ENCODE measurements at regions of chr5 and their contacts with region 1.

Region 1: DNA sequence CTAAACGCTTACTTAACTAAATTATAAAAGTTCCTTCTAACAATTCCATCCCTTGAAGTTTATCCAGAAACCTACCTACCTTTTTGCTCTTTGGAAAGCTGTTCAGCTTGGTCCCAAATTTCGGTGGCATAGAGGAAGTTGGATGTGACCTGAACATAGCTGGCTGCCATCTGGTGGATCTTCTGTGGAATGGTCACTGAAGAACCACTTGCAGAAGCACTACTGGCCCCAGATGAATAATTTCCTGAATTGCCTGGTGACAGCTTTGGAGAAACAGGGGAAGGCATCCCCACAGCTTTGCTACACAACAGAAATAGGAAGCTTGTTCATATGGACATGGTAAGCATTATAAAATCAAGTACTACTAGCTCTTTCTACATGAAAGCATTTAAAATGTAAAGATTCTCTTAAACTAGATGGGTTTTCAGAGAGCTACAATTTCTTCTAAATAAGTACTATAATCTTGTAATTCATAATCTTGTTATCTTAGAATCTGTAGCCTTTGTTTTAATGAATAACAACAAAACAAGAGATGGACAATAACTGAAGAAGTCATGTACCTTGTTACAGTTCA is 9.9 kb downstream of the LEAP2 start:
- DNase-seq: peak; percentile 82
- H3K4me3 ChIP-seq: no peak overlapping the region
- H3K27ac ChIP-seq: no peak overlapping the region
- H3K4me1 ChIP-seq: peaks cover 6% of the 10 kb centered on the region
- H3K27me3 ChIP-seq: no peaks in the 10 kb centered on the region
- CTCF ChIP-seq: peak; percentile 66 to 69
- POLR2A ChIP-seq: no peak

Region 2: DNA sequence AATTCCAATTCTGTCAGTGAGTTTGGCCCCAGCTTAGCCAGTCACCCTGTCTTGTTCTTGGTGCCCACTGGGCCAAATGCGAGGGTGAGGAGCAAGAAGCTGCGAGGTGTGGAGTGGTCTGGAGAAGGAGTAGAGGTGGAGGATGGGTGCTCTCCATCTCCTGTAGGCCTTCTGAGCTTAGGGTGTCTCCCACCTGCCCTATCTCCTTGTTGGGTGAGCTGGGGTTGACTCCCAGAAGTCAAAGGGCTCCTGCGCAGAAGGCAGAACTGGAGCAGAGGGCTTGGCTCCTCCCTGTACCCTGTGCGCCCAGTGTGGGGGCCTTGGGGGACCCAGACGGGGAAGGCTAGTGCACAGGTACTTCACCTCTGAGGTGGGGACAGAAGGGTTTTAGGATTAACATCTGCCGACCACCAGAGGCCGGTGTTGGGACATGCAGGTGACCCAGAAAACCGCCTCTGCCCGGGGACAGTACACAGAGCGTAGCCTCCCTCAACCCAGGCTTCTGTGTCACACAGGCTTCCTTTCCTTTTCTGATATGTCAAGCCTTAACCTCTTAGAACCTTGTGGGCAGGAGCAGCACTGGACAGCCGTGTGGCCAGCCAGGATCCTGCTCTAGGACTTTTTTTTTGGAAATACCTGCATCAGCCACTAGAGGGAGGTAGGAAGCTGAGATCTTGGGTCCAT is 356.9 kb before region 1 on chr5:
- CTCF ChIA-PET with region 1: interaction called, 5 read pairs
- POLR2A ChIA-PET with region 1: no interaction called
- dilution Hi-C with region 1: no loop called
- intact Hi-C with region 1: loop called (anchors 1 kb)
- DNase-seq: peak; percentile 75
- H3K4me3 ChIP-seq: no peak overlapping the region
- H3K27ac ChIP-seq: no peak overlapping the region
- H3K4me1 ChIP-seq: no peaks in the 10 kb centered on the region
- H3K27me3 ChIP-seq: peaks cover under 1 to 3% of the 10 kb centered on the region in 2 experiments
- CTCF ChIP-seq: peak; percentile 76 to 83
- POLR2A ChIP-seq: no peak

Region 3: GRCh38 chr5:132753135-132753987 is 130.0 kb before region 1 on chr5:
- CTCF ChIA-PET with region 1: interaction called, 14 read pairs
- POLR2A ChIA-PET with region 1: no interaction called
- dilution Hi-C with region 1: no loop called
- intact Hi-C with region 1: loop called (anchors 5 kb)
- DNase-seq: no peak
- H3K4me3 ChIP-seq: no peak overlapping the region
- H3K27ac ChIP-seq: no peak overlapping the region
- H3K4me1 ChIP-seq: no peaks in the 10 kb centered on the region
- H3K27me3 ChIP-seq: no peaks in the 10 kb centered on the region
- CTCF ChIP-seq: peak in 1 of 2 donors; percentile 6
- POLR2A ChIP-seq: no peak

Region 4: GRCh38 chr5:132768485-132768868 is 114.9 kb before region 1 on chr5:
- CTCF ChIA-PET with region 1: no interaction called
- POLR2A ChIA-PET with region 1: no interaction called
- dilution Hi-C with region 1: no loop called
- intact Hi-C with region 1: no loop called
- DNase-seq: no peak
- H3K4me3 ChIP-seq: no peak overlapping the region
- H3K27ac ChIP-seq: no peak overlapping the region
- H3K4me1 ChIP-seq: peaks cover 26% of the 10 kb centered on the region
- H3K27me3 ChIP-seq: no peaks in the 10 kb centered on the region
- CTCF ChIP-seq: no peak
- POLR2A ChIP-seq: no peak

Region 5: DNA sequence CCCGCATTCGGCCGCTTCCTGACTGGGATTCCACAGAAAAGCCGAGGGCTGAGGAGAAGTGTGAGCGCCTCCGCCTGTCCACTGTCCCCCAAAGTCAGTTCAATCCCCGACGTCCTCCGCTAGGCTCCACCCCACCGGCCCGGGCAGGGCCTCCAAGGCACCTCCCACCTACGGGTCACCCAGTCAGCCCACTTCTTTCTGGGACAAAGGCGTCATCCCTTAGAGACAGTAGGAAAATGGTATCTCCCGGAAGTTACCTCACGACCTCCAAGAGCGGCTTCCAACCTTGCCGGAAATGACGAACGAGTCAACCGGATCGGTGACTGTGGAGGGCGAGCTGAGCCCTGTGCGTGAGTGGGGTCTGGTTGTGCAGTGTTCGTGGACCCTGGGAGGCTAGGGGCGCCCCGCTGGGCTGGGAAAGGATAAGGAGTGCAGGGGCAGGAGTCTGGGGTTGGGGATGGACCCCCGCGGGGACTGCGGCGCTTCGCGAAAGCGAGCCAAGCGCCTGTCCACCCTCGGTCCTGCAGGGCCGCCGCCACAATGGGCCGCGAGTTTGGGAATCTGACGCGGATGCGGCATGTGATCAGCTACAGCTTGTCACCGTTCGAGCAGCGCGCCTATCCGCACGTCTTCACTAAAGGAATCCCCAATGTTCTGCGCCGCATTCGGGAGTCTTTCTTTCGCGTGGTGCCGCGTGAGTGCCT is 16.9 kb before region 1 on chr5 and contains the starts of genes GDF9 and UQCRQ:
- CTCF ChIA-PET with region 1: interaction called, 11 read pairs
- POLR2A ChIA-PET with region 1: interaction called, 6 read pairs
- dilution Hi-C with region 1: no loop called
- intact Hi-C with region 1: loop called (anchors 1 kb)
- DNase-seq: peak; percentile 99
- H3K4me3 ChIP-seq: peak within 1 kb of the TSS; percentile 14 to 89 (median 76)
- H3K27ac ChIP-seq: peak within 1 kb of the TSS; percentile 78
- H3K4me1 ChIP-seq: peaks cover 12% of the 10 kb centered on the region
- H3K27me3 ChIP-seq: peaks cover 0 to 6% of the 10 kb centered on the region in 2 experiments
- CTCF ChIP-seq: peak in 1 of 2 donors; percentile 43
- POLR2A ChIP-seq: peak; percentile 94
- total RNA-seq, gene GDF9: 0.32 TPM in 1 of 2 replicates, not detected in the other
- total RNA-seq, gene UQCRQ: 390 and 458 TPM in 2 replicates

Region 6: GRCh38 chr5:132905867-132906295 is 22.5 kb after region 1 on chr5:
- CTCF ChIA-PET with region 1: interaction called, 14 read pairs
- POLR2A ChIA-PET with region 1: no interaction called
- dilution Hi-C with region 1: no loop called
- intact Hi-C with region 1: no loop called
- DNase-seq: peak; percentile 78
- H3K4me3 ChIP-seq: no peak overlapping the region
- H3K27ac ChIP-seq: no peak overlapping the region
- H3K4me1 ChIP-seq: peaks cover 23% of the 10 kb centered on the region
- H3K27me3 ChIP-seq: no peaks in the 10 kb centered on the region
- CTCF ChIP-seq: no peak
- POLR2A ChIP-seq: no peak

Measured in endothelial cell of umbilical vein (primary cell).